BJ (cell line): ENCODE measurements at regions of chr11 and their contacts with region 1.

Region 1: GRCh38 chr11:123054301-123055065 is 7.5 kb downstream of the HSPA8 start:
- DNase-seq: no peak
- H3K4me3 ChIP-seq: no peak overlapping the region
- H3K27me3 ChIP-seq: no peaks in the 10 kb centered on the region
- CTCF ChIP-seq: peak; percentile 63

Region 2: GRCh38 chr11:122904090-122904489 is 150.4 kb before region 1 on chr11:
- CTCF ChIA-PET with region 1: no interaction called
- POLR2A ChIA-PET with region 1: interaction called, 13 read pairs
- DNase-seq: no peak
- H3K4me3 ChIP-seq: no peak overlapping the region
- H3K27me3 ChIP-seq: no peaks in the 10 kb centered on the region
- CTCF ChIP-seq: no peak